SK-N-SH (cell line): ENCODE measurements at regions of chr1 and their contacts with region 1.

Region 1: GRCh38 chr1:7070389-7071029 is 285.3 kb downstream of the CAMTA1 start:
- DNase-seq: peak; percentile 87
- H3K4me3 ChIP-seq: no peak overlapping the region; a peak in 1 of 4 replicates
- H3K27ac ChIP-seq: no peak overlapping the region
- H3K4me1 ChIP-seq: no peaks in the 10 kb centered on the region; a peak in 1 of 4 replicates
- H3K27me3 ChIP-seq: no peaks in the 10 kb centered on the region
- CTCF ChIP-seq: peak; percentile 72
- EP300 ChIP-seq: no peak
- RAD21 ChIP-seq: peak; percentile 84

Region 2: DNA sequence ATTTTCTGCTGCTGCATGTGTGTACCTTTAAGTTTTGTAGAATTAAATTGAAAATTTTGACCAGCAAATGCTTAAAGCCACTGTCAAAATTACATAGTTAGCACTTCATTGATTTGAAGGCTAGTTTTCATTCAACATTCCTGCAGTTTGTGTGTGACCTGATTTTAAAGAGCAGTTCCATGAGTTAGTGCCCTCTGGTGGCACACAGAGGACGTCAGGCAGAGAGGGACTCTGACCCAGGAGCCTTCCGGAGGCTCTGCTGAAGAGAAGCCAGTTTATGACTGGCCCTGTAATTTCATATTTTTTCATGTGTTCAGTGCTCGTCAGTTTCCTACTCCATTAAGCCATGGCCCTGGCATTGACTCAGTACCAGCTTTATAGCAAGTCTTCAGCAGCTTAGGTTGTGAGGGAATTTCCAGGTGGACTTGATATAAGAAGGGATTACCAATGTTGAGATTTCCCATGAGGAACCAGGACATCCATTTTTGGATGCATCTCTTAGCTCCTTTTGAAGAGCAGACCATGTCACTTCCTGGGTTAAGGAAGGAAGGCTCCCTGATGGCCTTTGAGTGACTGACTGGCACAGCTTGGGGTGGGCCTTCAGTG is 180.5 kb before region 1 on chr1:
- CTCF ChIA-PET with region 1: interaction called, 14 read pairs
- POLR2A ChIA-PET with region 1: no interaction called
- DNase-seq: peak; percentile 69
- H3K4me3 ChIP-seq: peak overlapping the region in 1 of 2 experiments; percentile 48; a peak in 1 of 4 replicates
- H3K27ac ChIP-seq: no peak overlapping the region
- H3K4me1 ChIP-seq: peaks cover 0 to 4% of the 10 kb centered on the region in 2 experiments; a peak in 2 of 4 replicates
- H3K27me3 ChIP-seq: no peaks in the 10 kb centered on the region
- CTCF ChIP-seq: peak; percentile 78
- EP300 ChIP-seq: no peak
- RAD21 ChIP-seq: peak; percentile 71

Region 3: DNA sequence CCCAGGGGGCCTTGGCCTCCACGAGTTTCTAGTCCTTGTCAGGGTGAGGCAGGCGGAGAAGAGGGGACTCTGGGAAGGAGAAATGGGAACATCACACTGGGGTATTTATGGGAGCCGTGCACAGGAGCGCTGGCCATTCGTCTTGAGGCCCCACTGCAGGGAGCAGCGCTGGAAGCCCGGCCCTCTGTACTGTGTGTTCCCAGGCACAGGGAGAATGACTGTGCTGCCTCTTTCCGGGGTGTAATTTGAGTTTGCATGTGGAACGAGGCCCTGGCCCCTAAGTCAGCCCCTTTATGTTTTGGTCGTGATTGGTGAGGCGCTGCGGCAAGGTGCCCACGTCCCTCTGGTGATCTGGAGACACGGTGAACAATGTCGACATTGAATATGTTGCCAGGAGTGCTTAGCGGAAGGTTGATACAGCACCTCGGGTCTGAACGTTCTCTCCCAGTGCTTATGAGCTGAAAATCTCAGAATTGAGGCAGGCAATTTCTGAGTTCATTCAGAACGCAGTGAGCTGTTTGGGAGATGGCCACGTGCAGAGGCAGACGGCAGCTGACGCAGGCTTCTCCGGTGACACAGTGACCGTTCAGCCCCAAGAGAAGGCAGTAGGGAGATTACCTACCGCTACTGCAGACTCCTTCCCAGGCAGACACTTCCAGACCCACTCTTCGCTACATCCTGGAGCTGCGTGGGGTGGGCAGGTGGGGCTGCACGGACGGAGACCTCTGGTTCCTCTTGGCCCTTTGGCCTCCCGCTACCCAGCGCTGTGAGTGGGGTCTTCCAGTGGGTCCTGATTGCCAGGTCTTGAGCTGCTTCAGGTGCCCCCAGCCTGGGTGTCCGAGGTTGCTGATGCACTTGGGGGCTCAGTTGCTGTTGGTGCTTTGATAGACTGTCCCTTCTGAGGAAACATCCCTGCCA is 19.5 kb before region 1 on chr1:
- CTCF ChIA-PET with region 1: interaction called, 50 read pairs
- POLR2A ChIA-PET with region 1: no interaction called
- DNase-seq: no peak
- H3K4me3 ChIP-seq: no peak overlapping the region
- H3K27ac ChIP-seq: no peak overlapping the region
- H3K4me1 ChIP-seq: peaks cover 0 to 15% of the 10 kb centered on the region in 2 experiments; a peak in 2 of 4 replicates
- H3K27me3 ChIP-seq: no peaks in the 10 kb centered on the region
- CTCF ChIP-seq: no peak
- EP300 ChIP-seq: no peak
- RAD21 ChIP-seq: no peak

Region 4: DNA sequence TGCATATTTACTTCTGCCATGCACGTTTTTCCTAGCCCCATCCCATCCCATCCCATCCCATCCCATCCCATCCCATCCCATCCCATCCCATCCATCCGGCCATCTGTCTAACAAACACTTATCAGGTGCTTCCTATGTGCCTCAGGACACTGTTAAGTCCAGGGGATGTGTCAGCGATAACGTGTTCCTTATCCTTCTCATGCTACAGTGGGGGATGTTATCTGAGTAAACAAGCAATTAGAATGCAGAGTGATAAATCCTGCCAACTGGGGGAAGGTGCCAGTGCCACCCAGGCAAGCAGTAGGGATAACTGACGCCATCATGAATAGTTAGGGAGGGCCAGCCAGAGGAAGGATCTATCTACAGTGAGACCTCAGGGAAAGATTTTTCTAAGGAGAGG is 19.0 kb after region 1 on chr1:
- CTCF ChIA-PET with region 1: interaction called, 66 read pairs
- POLR2A ChIA-PET with region 1: no interaction called
- DNase-seq: peak; percentile 73
- H3K4me3 ChIP-seq: no peak overlapping the region
- H3K27ac ChIP-seq: no peak overlapping the region
- H3K4me1 ChIP-seq: peaks cover 0 to 15% of the 10 kb centered on the region in 2 experiments; a peak in 1 of 4 replicates
- H3K27me3 ChIP-seq: no peaks in the 10 kb centered on the region; the same call in 1 of the 2 replicates
- CTCF ChIP-seq: no peak
- EP300 ChIP-seq: peak in 1 of 2 experiments; percentile 65; a peak in 1 of 4 replicates
- RAD21 ChIP-seq: no peak